A673 (cell line): ENCODE measurements at regions of chr2 and their contacts with region 1.

Region 1: GRCh38 chr2:212536817-212537725 is 1.5 kb downstream of the ERBB4 start:
- DNase-seq: no peak
- H3K4me3 ChIP-seq: peak overlapping the region; percentile 95
- H3K27ac ChIP-seq: peak overlapping the region; percentile 88
- H3K4me1 ChIP-seq: peaks cover 38% of the 10 kb centered on the region
- H3K27me3 ChIP-seq: no peaks in the 10 kb centered on the region
- CTCF ChIP-seq: 0 out of 2 replicates have a peak, but pooled peaks have one; percentile 1

Region 2: DNA sequence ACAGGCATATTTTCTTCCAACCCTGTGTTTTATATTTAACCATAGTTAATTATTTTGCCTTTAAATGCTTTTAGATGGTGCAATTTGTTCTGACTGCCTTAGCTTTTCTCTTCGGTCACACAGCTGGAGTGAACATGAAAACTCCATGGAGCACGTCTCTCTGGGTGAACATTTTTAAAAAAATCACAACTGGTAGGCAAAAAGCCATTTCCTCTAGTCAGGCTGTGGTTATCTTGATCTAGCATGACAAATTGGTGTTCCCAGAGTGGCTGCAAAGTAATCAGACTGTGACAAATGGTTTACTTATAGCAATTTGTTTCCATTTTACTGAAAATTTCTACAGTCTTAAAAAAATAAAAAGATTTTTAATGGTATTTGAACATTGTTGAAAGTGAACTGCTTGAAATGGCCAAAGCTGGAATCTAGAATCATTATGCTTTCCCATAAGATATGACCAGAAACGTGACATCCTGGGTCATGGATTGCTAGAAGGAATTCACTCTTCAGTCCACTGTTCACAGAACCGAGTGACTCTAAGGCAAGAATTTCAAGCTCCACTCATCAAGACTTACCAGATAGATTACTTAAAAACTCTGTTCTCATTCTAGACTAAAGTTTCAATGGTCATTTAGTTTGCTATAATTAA is 1277.1 kb before region 1 on chr2:
- CTCF ChIA-PET with region 1: no interaction called
- POLR2A ChIA-PET with region 1: no interaction called
- intact Hi-C with region 1: loop called (anchors 5 kb)
- DNase-seq: peak; percentile 96
- H3K4me3 ChIP-seq: no peak overlapping the region
- H3K27ac ChIP-seq: peak overlapping the region; percentile 100
- H3K4me1 ChIP-seq: peaks cover 21% of the 10 kb centered on the region
- H3K27me3 ChIP-seq: no peaks in the 10 kb centered on the region
- CTCF ChIP-seq: no peak

Region 3: GRCh38 chr2:211745295-211746097 is 791.6 kb before region 1 on chr2:
- CTCF ChIA-PET with region 1: interaction called, 3 read pairs
- POLR2A ChIA-PET with region 1: no interaction called
- intact Hi-C with region 1: loop called (anchors 5 kb)
- DNase-seq: peak; percentile 91
- H3K4me3 ChIP-seq: no peak overlapping the region
- H3K27ac ChIP-seq: peak overlapping the region; percentile 64
- H3K4me1 ChIP-seq: peaks cover 36% of the 10 kb centered on the region
- H3K27me3 ChIP-seq: no peaks in the 10 kb centered on the region
- CTCF ChIP-seq: peak; percentile 93

Region 4: DNA sequence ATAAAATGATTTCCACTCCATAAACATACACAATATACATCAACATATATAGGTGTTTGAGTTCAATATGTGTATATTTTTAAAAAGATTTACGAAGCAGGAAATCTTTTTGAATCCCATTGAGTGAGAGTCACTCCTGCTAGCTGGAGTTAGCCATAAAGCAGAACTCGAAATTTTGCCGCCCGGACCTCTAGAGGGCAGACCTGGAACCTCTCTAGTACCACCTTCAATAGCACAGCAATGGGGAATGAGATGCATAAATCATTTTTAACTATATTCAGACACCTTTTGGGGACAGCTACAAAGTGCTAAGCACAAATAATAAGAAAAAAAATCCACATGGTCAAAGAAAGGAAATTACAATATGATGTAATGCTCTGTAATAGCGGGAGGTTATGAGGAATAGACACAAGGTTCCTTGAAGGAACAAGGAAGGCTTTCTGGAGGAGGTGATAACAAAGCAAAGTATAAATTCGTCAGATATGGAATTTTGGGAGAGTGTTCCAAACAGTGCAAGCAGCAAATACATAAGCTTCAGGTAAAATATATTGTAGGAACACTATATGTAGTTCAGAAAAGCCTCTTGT is 531.9 kb before region 1 on chr2:
- CTCF ChIA-PET with region 1: no interaction called
- POLR2A ChIA-PET with region 1: interaction called, 3 read pairs
- intact Hi-C with region 1: loop called (anchors 5 kb)
- DNase-seq: peak; percentile 83
- H3K4me3 ChIP-seq: no peak overlapping the region
- H3K27ac ChIP-seq: no peak overlapping the region
- H3K4me1 ChIP-seq: peaks cover 44% of the 10 kb centered on the region
- H3K27me3 ChIP-seq: no peaks in the 10 kb centered on the region
- CTCF ChIP-seq: peak; percentile 87

Region 5: GRCh38 chr2:212249451-212249850 is 287.6 kb before region 1 on chr2:
- CTCF ChIA-PET with region 1: interaction called, 3 read pairs
- POLR2A ChIA-PET with region 1: no interaction called
- intact Hi-C with region 1: loop called (anchors 5 kb)
- DNase-seq: peak; percentile 51
- H3K4me3 ChIP-seq: no peak overlapping the region
- H3K27ac ChIP-seq: no peak overlapping the region
- H3K4me1 ChIP-seq: peaks cover 38% of the 10 kb centered on the region
- H3K27me3 ChIP-seq: no peaks in the 10 kb centered on the region
- CTCF ChIP-seq: peak; percentile 66